Activated T-helper 1 cell treated with anti-CD3 and anti-CD28 coated beads, Interleukin-12 subunit alpha, Interleukin-12 subunit beta, Interleukin-2, Interleukin-4 antibody, amounts not matched to agents 30 ng/mL and 10 ng/mL and 1 ng/mL, durations not matched to agents 14 hours and 24 hours and 36 hours (primary cell): ENCODE measurements at regions of chr12 and their contacts with region 1.

Region 1: DNA sequence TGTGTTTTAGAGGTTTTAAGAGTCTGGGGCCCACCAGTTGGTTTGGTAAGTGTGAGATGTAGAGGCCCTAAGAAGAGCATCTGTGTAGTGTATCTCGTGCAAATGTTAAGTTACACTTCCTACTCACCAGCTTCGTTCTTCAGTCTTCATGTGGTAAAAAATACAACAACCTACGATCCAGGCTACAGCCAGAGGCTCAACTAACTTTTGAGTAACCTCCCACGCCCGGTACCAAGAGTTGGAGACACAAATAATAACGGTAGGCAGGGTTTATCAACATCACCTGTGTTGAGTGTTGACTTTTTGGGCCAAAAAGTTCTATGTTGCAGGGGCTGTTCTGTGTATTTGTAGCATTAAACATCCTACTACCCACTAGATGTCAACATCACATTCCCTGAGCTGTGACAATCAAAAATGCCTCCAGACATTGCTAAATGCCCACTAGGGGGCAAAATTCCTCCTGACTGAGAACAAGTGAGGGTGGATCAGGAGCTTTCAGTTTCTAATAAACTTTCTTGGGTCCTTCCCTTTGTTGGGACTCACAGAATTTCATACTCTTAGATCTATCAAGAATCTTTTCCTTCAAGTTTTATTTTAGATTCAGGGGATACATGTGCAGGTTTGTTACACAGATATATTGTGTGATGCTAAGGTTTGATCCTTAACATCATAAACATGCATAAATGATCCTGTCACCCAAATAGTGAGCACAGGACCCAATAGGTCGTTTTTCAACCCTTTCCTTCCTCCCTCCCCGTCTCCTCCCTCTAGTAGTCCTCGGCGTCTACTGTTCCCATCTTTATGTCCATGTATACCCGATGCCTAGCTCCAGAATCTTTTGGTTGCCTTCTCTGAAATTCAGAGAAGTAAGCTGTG is 94.7 kb downstream of the SLC2A13 start:
- DNase-seq: peak; percentile 49
- H3K4me3 Mint-ChIP-seq: peak overlapping the region; percentile 12
- H3K27ac Mint-ChIP-seq: no peak overlapping the region
- H3K4me1 Mint-ChIP-seq: peaks cover 31% of the 10 kb centered on the region
- H3K27me3 Mint-ChIP-seq: no peaks in the 10 kb centered on the region

Region 2: GRCh38 chr12:39887856-39888255 is 123.3 kb before region 1 on chr12:
- intact Hi-C with region 1: no loop called
- DNase-seq: no peak
- H3K4me3 Mint-ChIP-seq: no peak overlapping the region
- H3K27ac Mint-ChIP-seq: no peak overlapping the region
- H3K4me1 Mint-ChIP-seq: no peaks in the 10 kb centered on the region
- H3K27me3 Mint-ChIP-seq: peaks cover 3% of the 10 kb centered on the region

Region 3: DNA sequence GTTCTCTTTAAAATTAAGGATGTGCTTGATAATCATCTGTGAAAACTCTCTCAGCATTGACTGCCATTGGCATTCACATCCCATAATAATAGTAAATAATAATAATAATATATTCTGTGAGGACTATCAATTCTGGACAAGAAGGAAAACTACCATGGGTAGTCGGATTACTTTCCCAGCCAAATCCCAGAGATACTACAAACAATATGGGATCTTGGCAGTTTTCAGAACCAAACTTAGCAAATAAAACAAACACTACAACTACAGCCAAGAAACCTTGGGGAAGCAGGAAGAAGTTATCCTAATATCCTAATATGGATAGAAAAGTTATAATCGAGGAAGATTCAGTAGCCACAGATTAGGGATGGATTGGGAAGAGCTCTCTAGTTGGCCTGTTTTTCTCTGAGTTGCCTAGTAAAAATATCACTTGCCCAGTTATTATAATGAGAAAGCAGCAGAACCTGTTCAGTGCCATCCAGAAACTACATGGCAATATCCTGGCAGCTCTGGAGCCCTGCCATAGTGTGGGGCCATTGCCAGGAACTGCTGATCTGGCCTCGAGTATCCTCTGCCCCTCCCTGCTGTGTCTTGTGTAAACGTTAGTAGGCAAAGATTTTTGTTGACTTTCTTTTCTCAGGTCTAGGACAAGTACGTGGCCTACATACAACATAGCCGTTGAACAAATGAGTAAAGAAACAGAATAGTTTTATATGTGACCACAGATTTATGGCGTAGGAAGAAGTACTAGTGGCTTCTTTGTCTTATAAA is 98.7 kb before region 1 on chr12:
- intact Hi-C with region 1: no loop called
- DNase-seq: no peak
- H3K4me3 Mint-ChIP-seq: no peak overlapping the region
- H3K27ac Mint-ChIP-seq: no peak overlapping the region
- H3K4me1 Mint-ChIP-seq: no peaks in the 10 kb centered on the region
- H3K27me3 Mint-ChIP-seq: peaks cover 3% of the 10 kb centered on the region

Region 4: DNA sequence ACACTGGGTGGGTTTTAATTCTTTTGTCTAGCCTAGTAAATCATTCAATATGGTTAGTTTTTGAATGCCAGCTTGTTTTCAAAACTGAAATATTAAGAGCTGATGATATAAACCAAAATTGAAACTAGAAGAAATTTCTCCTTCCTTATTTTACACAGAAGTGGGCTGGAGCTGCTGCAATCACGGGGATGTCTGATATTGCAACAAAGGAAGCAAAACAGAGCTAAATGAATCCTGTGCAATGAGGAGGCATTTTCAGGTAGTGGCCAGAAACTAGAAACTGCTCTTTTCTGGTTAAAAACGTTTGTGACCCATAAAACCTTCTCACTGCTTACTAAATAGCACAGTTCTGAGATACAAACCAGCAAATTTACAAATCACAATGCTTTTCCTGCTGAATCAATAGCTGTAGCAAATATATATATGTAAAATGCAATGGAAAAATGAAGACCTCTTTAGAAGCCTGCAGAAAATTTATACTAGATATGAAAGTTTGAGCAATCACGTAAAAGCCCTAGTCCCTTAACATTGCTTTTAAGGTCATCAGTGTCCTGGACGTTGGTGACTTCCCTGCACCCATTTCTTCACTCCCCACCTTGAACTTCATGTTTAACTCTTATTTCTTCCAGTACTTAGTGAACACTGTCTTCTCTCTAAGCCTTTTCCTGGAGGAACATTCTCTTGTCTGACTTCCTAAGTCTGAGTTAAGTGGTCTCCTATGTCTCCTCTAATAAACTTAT is 197.7 kb after region 1 on chr12:
- intact Hi-C with region 1: no loop called
- DNase-seq: no peak
- H3K4me3 Mint-ChIP-seq: no peak overlapping the region
- H3K27ac Mint-ChIP-seq: no peak overlapping the region
- H3K4me1 Mint-ChIP-seq: no peaks in the 10 kb centered on the region
- H3K27me3 Mint-ChIP-seq: peaks cover 6% of the 10 kb centered on the region

Region 5: DNA sequence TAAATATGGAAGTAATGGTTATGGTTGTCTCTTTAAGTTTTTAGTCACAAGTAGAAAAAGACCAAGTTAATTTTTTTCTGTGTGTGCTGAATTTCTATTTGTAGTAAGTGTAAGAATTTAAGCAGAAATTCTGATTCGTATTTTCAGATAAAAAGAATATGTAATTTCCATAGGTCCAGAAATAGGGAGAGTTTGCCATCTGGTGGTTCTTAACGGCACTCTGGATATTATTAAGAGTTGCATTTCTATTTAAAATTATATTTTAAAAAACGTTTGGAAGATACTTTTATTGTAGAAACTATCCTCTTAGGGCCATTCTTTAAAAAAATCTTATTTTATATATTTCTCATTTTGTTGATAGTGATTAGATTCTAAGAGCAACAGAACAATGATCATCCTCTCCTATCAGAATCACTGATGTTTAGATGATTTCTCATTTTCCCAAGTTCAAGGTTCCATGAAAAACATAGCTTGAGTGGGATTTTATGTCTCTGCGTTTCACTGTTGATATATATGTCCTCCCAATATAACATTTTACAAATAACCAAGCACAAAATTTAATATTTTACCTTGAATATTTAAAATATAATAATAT is 301.9 kb after region 1 on chr12:
- intact Hi-C with region 1: loop called (anchors 2 kb)
- DNase-seq: no peak
- H3K4me3 Mint-ChIP-seq: no peak overlapping the region
- H3K27ac Mint-ChIP-seq: no peak overlapping the region
- H3K4me1 Mint-ChIP-seq: no peaks in the 10 kb centered on the region
- H3K27me3 Mint-ChIP-seq: peaks cover 4% of the 10 kb centered on the region